Right ventricle myocardium inferior (tissue), 1 donor: ENCODE measurements at regions of chr14 and their contacts with region 1.

Region 1: DNA sequence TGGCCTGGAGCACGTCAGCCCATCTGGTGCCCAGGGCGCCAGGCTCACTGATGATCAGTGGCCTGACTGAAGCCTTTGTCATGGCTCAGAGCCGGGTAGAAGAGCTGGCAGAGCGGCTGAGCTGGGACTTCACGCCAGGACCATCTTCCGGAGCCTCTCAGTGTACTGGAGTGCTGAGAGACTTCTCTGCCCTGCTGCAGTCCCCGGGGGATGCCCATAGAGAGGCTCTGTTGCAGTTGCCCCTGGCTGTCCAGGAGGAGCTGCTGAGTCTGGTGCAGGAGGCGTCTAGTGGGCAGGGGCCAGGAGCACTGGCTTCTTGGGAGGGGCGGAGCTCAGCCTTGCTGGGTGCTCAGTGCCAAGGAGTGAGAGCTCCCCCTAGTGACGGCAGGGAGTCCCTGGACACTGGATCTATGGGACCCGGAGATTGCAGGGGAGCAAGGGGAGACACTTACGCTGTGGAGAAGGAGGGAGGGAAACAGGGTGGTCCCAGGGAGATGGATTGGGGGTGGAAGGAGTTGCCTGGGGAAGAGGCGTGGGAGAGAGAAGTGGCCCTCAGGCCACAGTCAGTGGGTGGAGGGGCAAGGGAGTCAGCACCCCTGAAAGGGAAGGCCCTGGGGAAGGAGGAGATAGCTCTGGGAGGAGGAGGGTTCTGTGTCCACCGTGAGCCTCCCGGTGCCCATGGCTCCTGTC is 2.0 kb downstream of the KHNYN start:
- DNase-seq: peak; percentile 94
- ATAC-seq: peak; percentile 63

Region 2: DNA sequence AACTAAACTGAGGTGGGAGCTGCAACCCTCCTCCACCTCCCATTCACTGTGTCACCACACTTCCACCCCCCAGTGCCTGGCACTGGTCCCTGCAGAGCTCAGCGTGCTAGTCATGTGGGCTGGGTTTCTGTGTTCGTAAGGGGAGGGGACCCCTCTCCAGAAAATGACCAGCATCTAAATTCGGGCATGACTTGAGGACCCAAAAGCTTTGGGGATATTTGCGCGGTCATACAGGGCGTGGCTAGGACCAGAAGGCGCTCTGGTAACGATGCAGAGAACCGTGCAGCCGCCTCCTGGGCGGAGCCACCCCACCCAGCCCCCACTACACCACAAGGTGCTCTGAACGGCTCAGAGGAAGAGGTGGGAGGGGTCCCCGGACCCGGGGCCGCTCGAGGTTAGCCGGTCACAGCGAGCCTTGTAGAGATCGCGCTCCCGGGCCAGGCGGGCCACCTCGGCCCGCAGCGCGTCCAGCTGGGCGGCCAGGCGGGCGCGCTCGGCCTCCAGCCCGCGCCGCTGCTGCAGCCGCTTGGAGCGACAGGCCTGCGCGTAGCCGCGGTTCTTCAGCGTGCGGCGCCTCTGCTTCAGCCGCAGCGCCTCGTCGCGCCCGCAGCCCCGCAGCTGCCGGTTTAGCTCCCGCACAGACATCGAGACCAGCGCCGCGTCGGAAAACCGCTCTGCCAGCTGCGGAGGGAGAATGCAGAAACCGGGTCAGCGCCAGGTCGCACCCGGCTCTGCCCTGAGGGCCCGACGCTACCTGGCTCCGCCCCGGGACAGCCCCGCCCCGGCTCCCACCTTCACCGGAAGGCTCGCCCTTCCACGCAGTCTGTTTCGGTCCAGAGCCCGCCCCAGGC is 350.6 kb before region 1 on chr14:
- intact Hi-C with region 1: no loop called
- DNase-seq: no peak
- ATAC-seq: peak; percentile 76

Region 3: GRCh38 chr14:24141097-24141880 is 290.4 kb before region 1 on chr14 and contains the start of gene EMC9:
- intact Hi-C with region 1: loop called (anchors 10 kb)
- DNase-seq: peak; percentile 100
- ATAC-seq: peak; percentile 96
- total RNA-seq, gene EMC9: 14.6 TPM

Region 4: GRCh38 chr14:24241829-24242443 is 189.8 kb before region 1 on chr14:
- intact Hi-C with region 1: loop called (anchors 2 kb)
- DNase-seq: peak; percentile 95
- ATAC-seq: peak; percentile 94

Region 5: DNA sequence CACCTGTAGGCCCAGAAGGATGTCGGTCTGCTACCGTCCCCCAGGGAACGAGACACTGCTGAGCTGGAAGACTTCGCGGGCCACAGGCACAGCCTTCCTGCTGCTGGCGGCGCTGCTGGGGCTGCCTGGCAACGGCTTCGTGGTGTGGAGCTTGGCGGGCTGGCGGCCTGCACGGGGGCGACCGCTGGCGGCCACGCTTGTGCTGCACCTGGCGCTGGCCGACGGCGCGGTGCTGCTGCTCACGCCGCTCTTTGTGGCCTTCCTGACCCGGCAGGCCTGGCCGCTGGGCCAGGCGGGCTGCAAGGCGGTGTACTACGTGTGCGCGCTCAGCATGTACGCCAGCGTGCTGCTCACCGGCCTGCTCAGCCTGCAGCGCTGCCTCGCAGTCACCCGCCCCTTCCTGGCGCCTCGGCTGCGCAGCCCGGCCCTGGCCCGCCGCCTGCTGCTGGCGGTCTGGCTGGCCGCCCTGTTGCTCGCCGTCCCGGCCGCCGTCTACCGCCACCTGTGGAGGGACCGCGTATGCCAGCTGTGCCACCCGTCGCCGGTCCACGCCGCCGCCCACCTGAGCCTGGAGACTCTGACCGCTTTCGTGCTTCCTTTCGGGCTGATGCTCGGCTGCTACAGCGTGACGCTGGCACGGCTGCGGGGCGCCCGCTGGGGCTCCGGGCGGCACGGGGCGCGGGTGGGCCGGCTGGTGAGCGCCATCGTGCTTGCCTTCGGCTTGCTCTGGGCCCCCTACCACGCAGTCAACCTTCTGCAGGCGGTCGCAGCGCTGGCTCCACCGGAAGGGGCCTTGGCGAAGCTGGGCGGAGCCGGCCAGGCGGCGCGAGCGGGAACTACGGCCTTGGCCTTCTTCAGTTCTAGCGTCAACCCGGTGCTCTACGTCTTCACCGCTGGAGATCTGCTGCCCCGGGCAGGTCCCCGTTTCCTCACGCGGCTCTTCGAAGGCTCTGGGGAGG is 120.8 kb before region 1 on chr14 and contains the start of gene LTB4R:
- intact Hi-C with region 1: loop called (anchors 1 kb)
- DNase-seq: peak; percentile 87
- ATAC-seq: peak; percentile 87
- total RNA-seq, gene LTB4R: 2.1 TPM

Region 6: GRCh38 chr14:24332268-24332993 is 99.3 kb before region 1 on chr14:
- intact Hi-C with region 1: loop called (anchors 1 kb)
- DNase-seq: peak; percentile 77
- ATAC-seq: peak; percentile 70

Region 7: GRCh38 chr14:24366721-24367513 is 64.8 kb before region 1 on chr14:
- intact Hi-C with region 1: loop called (anchors 1 kb)
- DNase-seq: peak; percentile 93
- ATAC-seq: peak; percentile 88

Region 8: DNA sequence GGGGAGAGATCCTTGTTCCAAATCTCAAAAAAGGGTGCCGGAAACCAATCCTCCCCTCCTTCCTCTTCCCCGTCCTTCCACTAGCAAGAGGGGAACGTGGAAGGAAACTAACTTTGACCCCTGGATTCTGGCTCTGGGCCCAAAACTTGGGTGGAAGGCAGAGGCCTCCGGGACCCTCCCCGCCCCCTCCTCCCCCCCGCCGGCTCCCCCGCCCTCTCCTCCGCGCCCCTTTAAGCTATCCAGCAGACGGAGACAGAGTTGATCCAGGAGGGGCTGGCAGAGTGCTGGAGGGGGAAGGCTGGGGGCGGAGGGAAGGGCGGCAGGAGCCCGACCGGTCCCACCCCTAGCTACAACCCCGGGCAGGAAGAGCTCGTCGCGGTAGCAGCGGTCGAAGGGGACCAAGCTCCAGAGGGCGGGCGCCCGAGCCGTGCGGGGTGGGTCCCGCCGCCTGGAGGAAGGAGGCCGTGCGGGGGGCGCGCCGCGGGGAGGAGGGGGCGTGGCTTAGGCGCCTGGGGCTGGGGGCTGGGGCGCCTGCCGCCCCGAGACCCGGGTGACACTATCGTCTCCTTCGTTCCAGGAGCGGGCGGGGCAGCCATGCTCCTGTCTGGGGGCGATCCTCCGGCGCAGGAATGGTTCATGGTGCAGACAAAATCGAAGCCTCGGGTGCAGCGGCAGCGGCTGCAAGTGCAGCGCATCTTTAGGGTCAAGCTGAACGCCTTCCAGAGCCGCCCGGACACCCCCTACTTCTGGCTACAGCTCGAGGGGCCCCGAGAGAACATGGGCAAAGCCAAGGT is 32.9 kb before region 1 on chr14 and contains the start of gene NYNRIN:
- intact Hi-C with region 1: loop called (anchors 2 kb)
- DNase-seq: peak; percentile 76
- ATAC-seq: peak; percentile 77
- total RNA-seq, gene NYNRIN: 9.5 TPM

Region 9: GRCh38 chr14:24513009-24513408 is 81.3 kb after region 1 on chr14:
- intact Hi-C with region 1: no loop called
- DNase-seq: no peak
- ATAC-seq: no peak